GM10248 (cell line): ENCODE measurements at regions of chr7 and their contacts with region 1.

Region 1: GRCh38 chr7:86814661-86815379 is 171.1 kb downstream of the GRM3 start:
- DNase-seq: no peak
- CTCF ChIP-seq: peak; percentile 52

Region 2: GRCh38 chr7:86667732-86668131 is 147.1 kb before region 1 on chr7:
- CTCF ChIA-PET with region 1: interaction called, 158 read pairs
- POLR2A ChIA-PET with region 1: no interaction called
- DNase-seq: no peak
- CTCF ChIP-seq: peak; percentile 41

Region 3: GRCh38 chr7:86790383-86790782 is 24.4 kb before region 1 on chr7:
- CTCF ChIA-PET with region 1: interaction called, 13 read pairs
- POLR2A ChIA-PET with region 1: no interaction called
- DNase-seq: peak; percentile 16
- CTCF ChIP-seq: no peak

Region 4: DNA sequence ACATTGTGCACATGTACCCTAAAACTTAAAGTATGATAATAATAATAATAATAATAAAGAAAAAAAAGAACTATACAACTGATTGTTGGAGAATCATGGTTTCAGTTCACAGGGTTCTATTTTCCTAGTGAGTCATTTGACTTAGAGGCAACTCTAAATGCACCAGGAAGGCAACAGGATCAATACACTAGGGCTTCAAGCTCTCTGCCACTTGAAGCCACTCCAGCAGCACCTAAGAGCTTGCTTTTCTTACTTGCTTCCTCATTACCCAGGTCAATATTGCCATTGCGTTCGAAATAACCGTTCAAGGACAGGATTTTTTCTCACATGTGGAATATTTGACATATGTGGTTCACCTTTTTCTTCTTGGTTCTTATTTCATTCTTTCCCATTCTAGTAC is 18.5 kb after region 1 on chr7:
- CTCF ChIA-PET with region 1: interaction called, 21 read pairs
- POLR2A ChIA-PET with region 1: no interaction called
- DNase-seq: no peak
- CTCF ChIP-seq: no peak

Region 5: GRCh38 chr7:86904949-86905834 is 90.4 kb after region 1 on chr7:
- CTCF ChIA-PET with region 1: interaction called, 15 read pairs
- POLR2A ChIA-PET with region 1: no interaction called
- DNase-seq: no peak
- CTCF ChIP-seq: peak; percentile 71